ENCODE measurements at regions of chr7 and their contacts with region 1.

Region 1: GRCh38 chr7:66628361-66629140 is at the start of gene KCTD7:
- DNase-seq: peak; percentile 98 to 99
- ATAC-seq: peak; percentile 95 to 98 (median 96)
- H3K4me3 ChIP-seq: peak within 1 kb of the TSS; percentile 49 to 95 (median 80)
- H3K27ac ChIP-seq: peak within 1 kb of the TSS; percentile 90 to 98 (median 96)
- H3K4me1 ChIP-seq: peaks cover 0 to 40% (median 19%) of the 10 kb centered on the region in 9 donors
- H3K27me3 ChIP-seq: no peaks in the 10 kb centered on the region
- CTCF ChIP-seq: no peak
- total RNA-seq, gene KCTD7: 7.3 to 13.6 (median 9.1) TPM

Region 2: DNA sequence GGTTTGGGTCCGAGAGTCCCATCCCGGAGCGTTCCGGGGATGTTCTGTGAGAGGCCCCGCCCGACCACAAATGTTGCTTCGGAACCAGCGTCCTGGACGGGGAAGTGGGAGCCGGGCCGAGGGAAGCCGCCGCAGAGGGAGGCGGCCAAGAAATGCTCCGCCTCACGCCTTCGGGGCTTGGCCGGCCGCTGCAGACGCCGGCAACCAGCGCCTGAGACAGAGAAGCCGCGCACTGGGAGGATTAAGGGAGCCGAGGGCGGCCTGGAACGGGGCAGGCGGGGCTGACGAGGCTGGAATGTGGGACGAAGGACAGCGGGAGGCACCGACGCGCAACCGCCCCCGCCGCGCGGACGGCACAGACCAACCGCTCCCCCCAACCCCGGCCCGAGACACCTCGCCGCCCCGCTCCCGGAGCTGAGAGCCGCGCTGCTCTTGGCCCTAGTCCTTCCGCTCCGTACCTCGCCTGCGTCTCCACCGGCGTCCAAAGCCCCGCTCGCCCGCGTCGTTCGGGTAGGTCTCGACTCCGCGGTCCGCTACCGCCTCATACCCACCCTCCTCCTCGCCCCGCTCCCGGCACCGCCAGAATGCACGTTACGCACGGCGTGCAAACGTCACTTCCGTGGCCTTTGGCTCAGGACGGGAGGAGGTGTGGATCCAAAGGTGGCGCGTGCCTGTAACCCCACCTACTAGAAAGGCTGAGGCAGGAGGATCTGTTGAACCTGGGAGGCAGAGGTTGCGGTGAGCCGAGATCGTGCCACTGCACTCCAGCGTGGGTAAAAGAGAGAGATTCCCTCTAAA is 36.6 kb before region 1 on chr7:
- intact Hi-C with region 1: loop called in 5 of 10 experiments (anchors 2 to 5 kb)
- DNase-seq: peak; percentile 90 to 91
- ATAC-seq: peak; percentile 97 to 98 (median 98)
- H3K4me3 ChIP-seq: peak overlapping the region; percentile 68 to 98 (median 88)
- H3K27ac ChIP-seq: peak overlapping the region; percentile 84 to 97 (median 93)
- H3K4me1 ChIP-seq: peaks cover 0 to 47% (median 31%) of the 10 kb centered on the region in 9 donors
- H3K27me3 ChIP-seq: no peaks in the 10 kb centered on the region
- CTCF ChIP-seq: no peak